ENCODE measurements at regions of chr9 and their contacts with region 1.

Region 1: GRCh38 chr9:122356627-122357026 is 14.2 kb upstream of the PTGS1 start:
- DNase-seq: no peak
- H3K4me3 ChIP-seq: no peak overlapping the region
- H3K27ac ChIP-seq: no peak overlapping the region
- H3K4me1 ChIP-seq: no peaks in the 10 kb centered on the region
- H3K27me3 ChIP-seq: no peaks in the 10 kb centered on the region; a peak in 1 of 7 replicates
- CTCF ChIP-seq: peak; percentile 68 to 79 (median 78)
- EP300 ChIP-seq: no peak
- POLR2A ChIP-seq: no peak
- RAD21 ChIP-seq: peak; percentile 30 to 56; a peak in 3 of 4 replicates

Region 2: DNA sequence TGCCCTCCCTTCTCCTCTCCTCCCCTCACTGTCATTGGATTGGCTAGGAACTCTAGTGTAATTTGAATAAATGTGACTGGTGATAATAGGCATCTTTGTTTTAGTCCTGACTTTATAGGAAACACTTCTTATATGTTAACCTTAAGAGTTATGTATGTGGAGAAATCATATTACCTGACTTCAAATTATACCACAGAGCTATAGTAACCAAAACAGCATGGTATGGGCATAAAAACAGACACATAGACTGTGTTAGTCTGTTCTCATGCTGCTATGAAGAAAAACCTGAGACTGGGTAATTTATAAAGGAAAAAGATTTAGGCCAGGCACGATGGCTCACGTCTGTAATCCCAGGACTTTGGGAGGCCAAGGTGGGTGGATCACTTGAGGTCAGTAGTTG is 82.6 kb before region 1 on chr9:
- CTCF ChIA-PET with region 1: no interaction called
- POLR2A ChIA-PET with region 1: no interaction called
- DNase-seq: no peak
- H3K4me3 ChIP-seq: no peak overlapping the region
- H3K27ac ChIP-seq: no peak overlapping the region
- H3K4me1 ChIP-seq: no peaks in the 10 kb centered on the region
- H3K27me3 ChIP-seq: no peaks in the 10 kb centered on the region
- CTCF ChIP-seq: no peak
- EP300 ChIP-seq: no peak
- POLR2A ChIP-seq: no peak
- RAD21 ChIP-seq: no peak

Region 3: DNA sequence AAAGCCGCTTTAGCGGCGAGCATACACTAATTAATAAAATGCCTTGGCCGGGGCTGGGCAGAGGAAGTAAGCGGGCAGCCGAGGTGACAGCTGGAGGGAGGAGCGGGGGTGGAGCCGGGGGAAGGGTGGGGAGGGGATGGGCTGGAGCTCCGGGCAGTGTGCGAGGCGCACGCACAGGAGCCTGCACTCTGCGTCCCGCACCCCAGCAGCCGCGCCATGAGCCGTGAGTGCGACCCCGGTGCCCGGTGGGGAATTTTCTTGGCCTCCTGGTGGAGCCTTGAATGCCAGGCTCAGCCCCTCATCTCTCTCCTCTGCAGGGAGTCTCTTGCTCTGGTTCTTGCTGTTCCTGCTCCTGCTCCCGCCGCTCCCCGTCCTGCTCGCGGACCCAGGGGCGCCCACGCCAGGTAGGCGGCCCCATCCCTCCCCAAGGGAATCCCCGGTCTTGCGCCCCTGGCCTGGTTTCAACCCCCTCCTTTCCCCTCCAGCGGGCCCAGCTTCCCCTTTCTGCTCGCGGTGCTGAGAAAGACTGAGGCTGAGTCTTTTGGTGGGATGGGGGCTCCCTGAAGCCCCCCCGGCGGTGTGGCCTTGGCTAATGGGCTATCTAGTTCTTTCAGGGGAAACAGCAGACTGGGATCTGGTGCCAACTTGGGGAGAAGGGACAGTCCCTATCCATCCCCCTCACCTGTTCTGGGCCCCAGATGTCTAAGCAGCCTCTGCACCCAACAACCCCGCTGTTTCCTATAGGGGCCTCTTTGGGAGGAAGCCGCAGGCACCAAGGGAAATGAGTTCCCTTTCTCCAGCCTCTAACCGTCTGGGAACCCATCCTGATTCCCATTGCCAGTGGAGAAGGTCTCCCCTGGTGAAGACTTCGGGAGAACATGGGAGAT is 14.5 kb after region 1 on chr9 and contains the start of gene PTGS1:
- CTCF ChIA-PET with region 1: interaction called, 42 read pairs
- POLR2A ChIA-PET with region 1: interaction called, 5 read pairs
- DNase-seq: peak in 1 of 2 experiments; percentile 65
- H3K4me3 ChIP-seq: peak within 1 kb of the TSS; percentile 55 to 71 (median 59)
- H3K27ac ChIP-seq: no peak within 1 kb of the TSS
- H3K4me1 ChIP-seq: peaks cover 13 to 20% (median 16%) of the 10 kb centered on the region in 4 experiments
- H3K27me3 ChIP-seq: peaks cover 5 to 45% (median 36%) of the 10 kb centered on the region in 4 experiments
- CTCF ChIP-seq: no peak
- EP300 ChIP-seq: no peak
- POLR2A ChIP-seq: no peak
- RAD21 ChIP-seq: no peak
- total RNA-seq, gene PTGS1: 1.1 and 1.3 TPM in 2 replicates

Measured in H1 (cell line).